ENCODE measurements at regions of chr4 and their contacts with region 1.

Region 1: DNA sequence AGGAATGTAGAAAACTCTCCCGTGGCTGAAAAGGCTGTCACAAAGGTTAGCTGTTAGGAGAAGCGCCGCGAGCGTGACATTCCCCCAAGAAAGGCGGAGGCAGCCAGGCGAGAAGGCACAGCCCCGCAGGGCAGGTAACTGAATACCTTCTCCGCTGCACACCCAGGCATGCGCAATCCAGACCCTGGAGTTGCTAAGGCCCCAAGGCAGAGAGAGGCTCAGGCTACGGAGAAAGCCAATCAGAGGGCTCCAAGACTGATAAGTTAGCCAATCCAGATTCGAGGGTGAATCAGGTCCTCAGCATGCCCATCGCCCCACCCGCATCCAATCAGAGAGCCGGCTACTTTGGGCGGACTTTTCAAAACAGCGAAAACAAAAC is 485 bp upstream of the CCNG2 start:
- DNase-seq: peak; percentile 95
- H3K4me3 Mint-ChIP-seq: peak overlapping the region; percentile 95
- H3K27ac Mint-ChIP-seq: peak overlapping the region; percentile 96
- H3K4me1 Mint-ChIP-seq: peaks cover 35% of the 10 kb centered on the region
- H3K27me3 Mint-ChIP-seq: no peaks in the 10 kb centered on the region

Region 2: DNA sequence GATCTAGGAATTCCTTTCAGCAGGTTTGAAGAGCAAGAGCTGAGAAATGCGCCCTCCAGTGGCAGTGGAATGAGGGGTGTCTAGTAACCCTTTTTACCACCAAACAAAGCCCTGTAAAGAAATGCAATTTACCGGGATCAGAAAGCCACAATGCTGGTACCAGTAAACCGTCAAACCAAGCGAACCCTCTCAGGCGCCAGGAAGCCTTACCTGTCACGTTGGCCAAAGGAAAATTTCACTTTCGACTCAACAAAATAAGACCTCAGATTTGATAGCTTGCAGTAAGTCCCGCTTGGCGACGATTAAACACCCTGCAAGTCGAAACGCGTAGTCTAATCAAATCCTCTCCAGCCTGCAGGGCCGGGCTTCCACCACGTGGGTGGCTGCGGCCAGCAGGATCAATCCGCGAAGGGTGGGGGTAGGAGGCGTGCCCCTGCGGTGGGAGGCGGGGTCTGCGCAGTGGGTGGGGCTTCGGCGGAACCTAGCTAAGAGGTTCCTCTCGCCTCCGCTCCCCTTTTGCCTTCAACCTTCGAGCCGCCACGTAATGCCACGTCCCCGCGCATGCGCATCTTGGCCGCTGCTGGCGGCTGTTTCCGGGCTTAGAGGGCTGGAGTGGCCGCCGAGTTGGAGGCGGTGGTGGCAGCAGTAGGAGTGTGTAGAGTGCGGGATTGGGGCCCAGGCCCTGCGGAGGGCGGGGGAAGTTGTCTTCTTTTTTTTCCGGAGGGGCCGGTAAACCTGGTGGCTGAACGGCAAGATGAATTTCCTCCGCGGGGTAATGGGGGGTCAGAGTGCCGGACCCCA is 1432.3 kb before region 1 on chr4 and contains the start of gene USO1:
- intact Hi-C with region 1: loop called (anchors 10 kb)
- DNase-seq: peak; percentile 100
- H3K4me3 Mint-ChIP-seq: peak within 1 kb of the TSS; percentile 96
- H3K27ac Mint-ChIP-seq: peak within 1 kb of the TSS; percentile 97
- H3K4me1 Mint-ChIP-seq: peaks cover 57% of the 10 kb centered on the region
- H3K27me3 Mint-ChIP-seq: no peaks in the 10 kb centered on the region
- total RNA-seq, gene USO1: 44.5 and 48.6 TPM in 2 replicates

Region 3: GRCh38 chr4:76148142-76148865 is 1008.2 kb before region 1 on chr4 and contains the start of gene NUP54:
- intact Hi-C with region 1: loop called (anchors 2 kb)
- DNase-seq: peak; percentile 94
- H3K4me3 Mint-ChIP-seq: peak within 1 kb of the TSS; percentile 99
- H3K27ac Mint-ChIP-seq: peak within 1 kb of the TSS; percentile 97
- H3K4me1 Mint-ChIP-seq: peaks cover 35% of the 10 kb centered on the region
- H3K27me3 Mint-ChIP-seq: no peaks in the 10 kb centered on the region
- total RNA-seq, gene NUP54: 70.6 and 75.1 TPM in 2 replicates

Region 4: DNA sequence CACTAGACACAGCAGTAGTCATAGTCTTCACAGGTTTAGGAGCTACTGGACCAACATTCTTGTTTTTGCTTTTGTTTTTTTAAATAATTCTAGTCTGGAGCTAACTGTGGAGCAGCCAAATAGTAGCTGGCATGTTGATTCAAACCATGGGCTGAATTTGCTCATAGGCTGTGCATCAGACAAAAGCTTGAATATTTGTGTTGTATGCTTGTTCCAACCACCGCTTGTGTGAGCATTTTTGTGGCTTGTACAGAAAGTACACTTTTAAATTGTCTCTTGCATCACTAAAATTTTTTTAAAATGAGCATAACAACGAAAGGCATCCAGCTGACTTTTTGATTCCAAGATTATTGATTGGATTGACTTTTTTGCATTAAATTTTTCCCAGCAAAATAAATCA is 120.3 kb before region 1 on chr4:
- intact Hi-C with region 1: loop called (anchors 1 kb)
- DNase-seq: no peak
- H3K4me3 Mint-ChIP-seq: no peak overlapping the region
- H3K27ac Mint-ChIP-seq: no peak overlapping the region
- H3K4me1 Mint-ChIP-seq: peaks cover 13% of the 10 kb centered on the region
- H3K27me3 Mint-ChIP-seq: peaks cover 10% of the 10 kb centered on the region

Region 5: DNA sequence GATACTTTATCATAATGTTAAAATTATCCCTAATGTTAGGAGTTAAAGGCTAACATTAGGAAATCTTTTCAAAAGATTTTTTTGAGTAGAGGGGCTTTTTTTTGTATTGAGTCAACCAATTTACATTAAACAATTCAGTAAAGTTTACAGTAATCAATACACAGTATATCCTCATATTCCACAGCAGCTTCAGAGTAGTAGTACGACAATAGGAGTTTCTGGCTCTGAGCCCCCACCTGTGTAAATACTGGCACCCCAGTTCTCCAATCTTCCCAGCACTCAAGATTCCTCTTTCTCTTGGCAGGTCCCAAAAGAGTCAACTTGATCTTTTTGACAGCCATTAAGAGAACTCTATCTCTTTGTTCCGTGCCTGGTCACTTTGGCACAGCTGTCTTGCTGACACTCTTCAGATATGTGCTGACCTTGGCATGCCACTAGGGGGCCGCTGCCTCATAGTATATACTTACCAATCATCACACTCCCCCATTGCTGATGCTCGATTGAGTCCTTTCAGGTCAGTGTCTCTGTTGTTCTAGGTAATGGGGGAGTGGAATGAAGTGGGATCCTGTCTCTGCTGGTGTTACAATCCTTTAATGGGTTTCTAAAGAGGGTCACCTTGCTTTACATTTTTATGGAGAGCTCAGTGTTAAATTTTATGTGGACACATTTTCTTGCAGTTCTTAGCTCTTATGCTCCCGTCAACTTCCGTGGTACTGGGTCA is 61.3 kb before region 1 on chr4:
- intact Hi-C with region 1: loop called (anchors 1 kb)
- DNase-seq: peak; percentile 45
- H3K4me3 Mint-ChIP-seq: no peak overlapping the region
- H3K27ac Mint-ChIP-seq: no peak overlapping the region
- H3K4me1 Mint-ChIP-seq: peaks cover 18% of the 10 kb centered on the region
- H3K27me3 Mint-ChIP-seq: peaks cover 4% of the 10 kb centered on the region

Region 6: DNA sequence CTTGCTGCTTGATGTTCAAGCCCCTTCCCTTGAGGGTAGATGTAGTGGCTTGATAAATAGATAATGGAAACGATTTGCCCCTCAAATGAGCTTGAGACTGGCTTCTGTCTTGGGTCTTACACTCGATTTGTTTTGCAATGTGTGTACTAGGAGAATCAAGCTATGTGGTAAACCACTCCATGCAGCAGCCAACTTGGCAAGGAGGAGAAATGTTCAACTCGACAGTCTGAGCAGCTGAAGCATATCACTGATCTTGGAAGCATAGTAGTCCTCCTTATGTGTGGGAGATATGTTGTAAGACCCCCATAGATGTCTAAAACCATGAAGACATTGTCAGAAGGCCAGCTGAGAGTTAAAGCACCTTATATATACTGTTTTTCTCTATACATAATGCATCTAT is 125.8 kb after region 1 on chr4:
- intact Hi-C with region 1: no loop called
- DNase-seq: no peak
- H3K4me3 Mint-ChIP-seq: no peak overlapping the region
- H3K27ac Mint-ChIP-seq: no peak overlapping the region
- H3K4me1 Mint-ChIP-seq: no peaks in the 10 kb centered on the region
- H3K27me3 Mint-ChIP-seq: no peaks in the 10 kb centered on the region

Region 7: GRCh38 chr4:77819843-77820648 is 663.5 kb after region 1 on chr4:
- intact Hi-C with region 1: loop called (anchors 5 kb)
- DNase-seq: peak; percentile 92
- H3K4me3 Mint-ChIP-seq: peak overlapping the region; percentile 91
- H3K27ac Mint-ChIP-seq: peak overlapping the region; percentile 99
- H3K4me1 Mint-ChIP-seq: peaks cover 47% of the 10 kb centered on the region
- H3K27me3 Mint-ChIP-seq: peaks cover 5% of the 10 kb centered on the region